CD4-positive, alpha-beta memory T cell (primary cell): ENCODE measurements at regions of chr6 and their contacts with region 1.

Region 1: GRCh38 chr6:148947621-148948444 is 201.0 kb downstream of the UST start:
- DNase-seq: peak; percentile 70 to 82 (median 79)
- H3K4me3 ChIP-seq: no peak overlapping the region
- H3K4me3 Mint-ChIP-seq: no peak overlapping the region
- H3K27ac ChIP-seq: no peak overlapping the region
- H3K27ac Mint-ChIP-seq: no peak overlapping the region
- H3K4me1 ChIP-seq: no peaks in the 10 kb centered on the region
- H3K4me1 Mint-ChIP-seq: peaks cover 0 to 5% (median 4%) of the 10 kb centered on the region in 4 donors
- H3K27me3 ChIP-seq: no peaks in the 10 kb centered on the region
- H3K27me3 Mint-ChIP-seq: no peaks in the 10 kb centered on the region

Region 2: DNA sequence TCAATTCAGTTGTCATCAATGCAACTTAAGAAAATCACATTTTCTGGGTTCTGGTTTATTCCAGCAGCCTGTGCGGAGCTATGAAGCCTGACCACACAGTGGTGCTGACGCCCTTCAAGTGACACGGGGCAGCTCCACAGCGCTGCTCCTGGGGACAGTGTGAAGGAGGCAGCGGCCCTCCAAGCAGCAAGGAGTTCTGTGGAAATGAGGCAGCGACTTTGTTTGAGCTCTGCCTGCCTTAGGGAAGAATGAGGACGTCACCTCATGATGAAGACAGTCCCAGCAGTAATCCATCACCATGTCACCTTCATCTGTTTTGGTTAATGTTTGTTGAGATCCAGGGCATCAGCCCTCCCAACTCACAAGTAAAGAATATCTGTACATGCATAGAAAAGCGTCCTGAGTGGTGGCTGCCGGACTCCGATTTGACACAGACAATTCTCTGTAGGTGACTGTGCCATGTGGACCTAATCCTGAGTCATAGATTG is 369.5 kb before region 1 on chr6:
- CTCF ChIA-PET with region 1: interaction called, 21 read pairs
- POLR2A ChIA-PET with region 1: no interaction called
- intact Hi-C with region 1: loop called (anchors 1 kb)
- DNase-seq: peak in 4 of 5 donors; percentile 28 to 46 (median 41)
- H3K4me3 ChIP-seq: no peak overlapping the region
- H3K4me3 Mint-ChIP-seq: no peak overlapping the region
- H3K27ac ChIP-seq: no peak overlapping the region
- H3K27ac Mint-ChIP-seq: peak overlapping the region in 1 of 7 donors; percentile 72
- H3K4me1 ChIP-seq: no peaks in the 10 kb centered on the region
- H3K4me1 Mint-ChIP-seq: peaks cover 3 to 7% (median 5%) of the 10 kb centered on the region in 4 donors
- H3K27me3 ChIP-seq: no peaks in the 10 kb centered on the region
- H3K27me3 Mint-ChIP-seq: peaks cover 8 to 11% of the 10 kb centered on the region in 2 donors

Region 3: DNA sequence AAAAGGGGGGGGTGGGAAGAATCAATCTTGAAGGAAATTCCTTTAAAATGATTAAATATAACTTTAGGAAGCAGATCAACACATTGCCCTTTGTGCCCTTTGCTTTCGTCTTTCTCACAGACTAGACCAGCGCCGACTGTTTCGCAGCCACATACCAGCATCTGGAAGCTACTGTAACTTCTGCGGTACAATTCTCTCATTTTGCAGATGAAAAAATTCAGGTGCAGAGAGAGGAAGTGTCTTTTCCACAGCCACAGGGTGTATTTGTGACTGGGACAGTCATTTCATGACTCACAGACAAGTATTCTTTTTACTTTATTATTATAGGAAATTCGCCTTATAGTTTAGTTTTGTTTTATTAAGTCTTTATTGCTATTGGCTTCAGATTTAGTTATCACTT is 116.8 kb before region 1 on chr6:
- CTCF ChIA-PET with region 1: no interaction called
- POLR2A ChIA-PET with region 1: no interaction called
- intact Hi-C with region 1: loop called (anchors 5 kb)
- DNase-seq: peak; percentile 41 to 65 (median 51)
- H3K4me3 ChIP-seq: peak overlapping the region in 1 of 2 donors; percentile 29
- H3K4me3 Mint-ChIP-seq: peak overlapping the region; percentile 65 to 90 (median 82)
- H3K27ac ChIP-seq: peak overlapping the region; percentile 32
- H3K27ac Mint-ChIP-seq: peak overlapping the region; percentile 31 to 90 (median 66)
- H3K4me1 ChIP-seq: peaks cover 33% of the 10 kb centered on the region
- H3K4me1 Mint-ChIP-seq: peaks cover 29 to 67% (median 42%) of the 10 kb centered on the region in 4 donors
- H3K27me3 ChIP-seq: no peaks in the 10 kb centered on the region
- H3K27me3 Mint-ChIP-seq: no peaks in the 10 kb centered on the region

Region 4: GRCh38 chr6:148989585-148989984 is 41.8 kb after region 1 on chr6:
- CTCF ChIA-PET with region 1: no interaction called
- POLR2A ChIA-PET with region 1: no interaction called
- intact Hi-C with region 1: no loop called
- DNase-seq: no peak
- H3K4me3 ChIP-seq: no peak overlapping the region
- H3K4me3 Mint-ChIP-seq: no peak overlapping the region
- H3K27ac ChIP-seq: no peak overlapping the region
- H3K27ac Mint-ChIP-seq: no peak overlapping the region
- H3K4me1 ChIP-seq: no peaks in the 10 kb centered on the region
- H3K4me1 Mint-ChIP-seq: peaks cover 0 to 4% (median 2%) of the 10 kb centered on the region in 4 donors
- H3K27me3 ChIP-seq: no peaks in the 10 kb centered on the region
- H3K27me3 Mint-ChIP-seq: no peaks in the 10 kb centered on the region